ENCODE measurements at regions of chr1 and their contacts with region 1.

Region 1: DNA sequence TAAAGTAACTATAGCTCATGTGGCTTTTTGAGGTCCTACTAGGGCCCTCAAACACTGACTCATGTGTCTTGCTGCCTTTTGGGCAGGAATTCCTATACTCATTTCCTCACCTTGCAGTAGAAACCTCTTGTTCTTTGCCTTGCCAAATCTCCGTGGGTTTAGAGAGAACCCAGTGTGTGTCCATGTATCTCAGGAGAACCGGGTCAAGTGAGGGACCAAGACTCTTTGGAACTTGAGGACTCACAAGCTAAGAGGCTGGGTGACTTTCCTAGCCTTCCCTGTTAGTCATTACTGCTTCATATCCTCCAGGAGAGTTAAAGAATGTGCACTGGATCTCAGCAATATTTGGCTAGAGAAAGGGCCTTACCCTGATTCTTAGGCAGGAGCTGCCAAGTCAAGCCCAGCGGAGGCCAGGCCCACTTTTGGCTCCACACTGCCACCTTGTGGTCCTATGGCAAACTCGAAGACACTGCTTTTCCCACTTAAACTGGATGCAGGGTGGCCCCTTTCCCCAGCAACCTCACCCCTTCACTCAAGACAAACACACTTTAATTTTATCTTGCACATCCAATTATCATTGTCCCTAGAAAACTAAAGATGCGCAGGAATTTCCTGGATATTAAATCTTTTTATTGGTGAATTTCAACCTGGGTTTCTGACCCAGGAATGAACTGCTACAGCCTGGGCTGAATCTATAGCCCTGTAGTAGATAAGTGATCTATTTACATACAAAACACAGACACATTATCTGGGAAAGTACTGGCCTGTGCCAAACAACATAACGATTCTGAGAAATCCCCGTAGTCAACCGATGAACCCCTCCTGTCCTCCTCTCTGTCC is 10.6 kb downstream of the AVPR1B start:
- DNase-seq: peak; percentile 64
- H3K4me3 Mint-ChIP-seq: no peak overlapping the region
- H3K27ac Mint-ChIP-seq: no peak overlapping the region
- H3K4me1 Mint-ChIP-seq: no peaks in the 10 kb centered on the region
- H3K27me3 Mint-ChIP-seq: peaks cover 17% of the 10 kb centered on the region

Region 2: GRCh38 chr1:205791568-205792180 is 314.9 kb before region 1 on chr1:
- intact Hi-C with region 1: loop called (anchors 5 kb)
- DNase-seq: peak; percentile 48
- H3K4me3 Mint-ChIP-seq: no peak overlapping the region
- H3K27ac Mint-ChIP-seq: no peak overlapping the region
- H3K4me1 Mint-ChIP-seq: peaks cover 27% of the 10 kb centered on the region
- H3K27me3 Mint-ChIP-seq: no peaks in the 10 kb centered on the region

Region 3: DNA sequence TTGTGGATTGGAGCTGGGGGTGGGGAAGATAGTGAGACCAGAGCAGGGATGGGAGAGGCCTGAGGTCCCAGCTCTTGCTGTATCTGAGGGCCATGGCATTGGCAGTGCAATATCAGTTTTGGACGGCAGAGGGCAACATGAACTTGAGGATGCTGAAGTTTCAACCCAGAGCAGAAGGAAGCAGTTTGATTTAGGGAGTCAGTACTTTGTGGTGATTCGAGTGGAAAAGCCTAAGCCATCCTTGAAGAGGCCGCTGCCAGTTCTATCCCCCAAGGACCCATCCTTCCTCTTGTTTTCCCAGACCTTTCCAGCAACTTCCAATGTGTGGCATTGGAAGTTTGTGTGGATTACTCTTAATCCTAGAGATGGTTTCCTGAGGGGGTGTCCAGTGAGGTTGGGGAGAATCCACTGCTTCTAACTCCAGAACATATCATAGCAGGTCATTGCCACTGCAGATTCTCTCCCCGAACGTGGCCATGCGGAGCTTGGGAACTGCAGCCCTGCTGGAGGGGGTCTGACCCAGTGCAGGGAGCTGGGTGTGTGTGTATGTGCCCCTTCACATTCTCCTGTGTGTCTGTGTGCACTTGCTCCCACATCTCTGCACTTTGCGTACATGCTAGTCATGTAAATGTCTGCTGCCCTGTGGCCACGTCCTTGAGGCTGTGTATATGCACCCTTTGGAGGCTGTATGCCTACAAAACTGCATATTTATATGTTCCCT is 187.4 kb before region 1 on chr1:
- intact Hi-C with region 1: loop called (anchors 1 kb)
- DNase-seq: peak; percentile 54
- H3K4me3 Mint-ChIP-seq: no peak overlapping the region
- H3K27ac Mint-ChIP-seq: no peak overlapping the region
- H3K4me1 Mint-ChIP-seq: no peaks in the 10 kb centered on the region
- H3K27me3 Mint-ChIP-seq: no peaks in the 10 kb centered on the region

Region 4: GRCh38 chr1:205983925-205984725 is 122.4 kb before region 1 on chr1:
- intact Hi-C with region 1: loop called (anchors 1 kb)
- DNase-seq: no peak
- H3K4me3 Mint-ChIP-seq: no peak overlapping the region
- H3K27ac Mint-ChIP-seq: no peak overlapping the region
- H3K4me1 Mint-ChIP-seq: no peaks in the 10 kb centered on the region
- H3K27me3 Mint-ChIP-seq: peaks cover 3% of the 10 kb centered on the region

Region 5: DNA sequence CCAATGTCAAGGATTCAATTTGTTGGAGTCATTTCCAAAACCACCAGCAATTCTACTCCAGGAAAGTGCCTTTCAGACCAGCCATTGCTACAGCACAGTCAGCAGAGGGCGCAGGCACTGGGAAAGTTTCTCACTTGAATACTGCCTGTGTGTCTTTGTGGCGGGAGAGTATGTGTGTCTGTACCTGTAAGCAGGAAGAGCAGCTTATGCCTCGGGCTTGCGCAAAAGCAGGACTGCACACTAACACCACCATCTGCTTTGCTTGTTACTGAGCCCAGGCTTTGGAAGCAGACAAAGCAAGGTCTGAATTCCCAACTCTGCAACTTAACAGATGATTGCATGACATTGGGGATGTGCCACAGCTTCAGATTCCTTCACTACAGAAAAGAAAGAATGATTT is 75.8 kb before region 1 on chr1:
- intact Hi-C with region 1: loop called (anchors 1 kb)
- DNase-seq: peak; percentile 55
- H3K4me3 Mint-ChIP-seq: no peak overlapping the region
- H3K27ac Mint-ChIP-seq: no peak overlapping the region
- H3K4me1 Mint-ChIP-seq: peaks cover 2% of the 10 kb centered on the region
- H3K27me3 Mint-ChIP-seq: peaks cover 66% of the 10 kb centered on the region